Panc1 (cell line): ENCODE measurements at regions of chr9 and their contacts with region 1.

Region 1: GRCh38 chr9:20604562-20604961 is 17.7 kb downstream of the MLLT3 start:
- DNase-seq: no peak
- ATAC-seq: no peak
- H3K4me3 ChIP-seq: no peak overlapping the region
- H3K27ac ChIP-seq: no peak overlapping the region
- H3K4me1 ChIP-seq: no peaks in the 10 kb centered on the region
- H3K27me3 ChIP-seq: no peaks in the 10 kb centered on the region
- CTCF ChIP-seq: no peak

Region 2: GRCh38 chr9:20356403-20357035 is 248.0 kb before region 1 on chr9:
- CTCF ChIA-PET with region 1: no interaction called
- POLR2A ChIA-PET with region 1: no interaction called
- in situ Hi-C with region 1: no loop called
- intact Hi-C with region 1: loop called (anchors 10 kb)
- DNase-seq: peak; percentile 24
- ATAC-seq: no peak; the same call in 1 of the 2 replicates
- H3K4me3 ChIP-seq: no peak overlapping the region
- H3K27ac ChIP-seq: no peak overlapping the region
- H3K4me1 ChIP-seq: no peaks in the 10 kb centered on the region
- H3K27me3 ChIP-seq: no peaks in the 10 kb centered on the region
- CTCF ChIP-seq: peak; percentile 65